ENCODE measurements at regions of chr22 and their contacts with region 1.

Region 1: DNA sequence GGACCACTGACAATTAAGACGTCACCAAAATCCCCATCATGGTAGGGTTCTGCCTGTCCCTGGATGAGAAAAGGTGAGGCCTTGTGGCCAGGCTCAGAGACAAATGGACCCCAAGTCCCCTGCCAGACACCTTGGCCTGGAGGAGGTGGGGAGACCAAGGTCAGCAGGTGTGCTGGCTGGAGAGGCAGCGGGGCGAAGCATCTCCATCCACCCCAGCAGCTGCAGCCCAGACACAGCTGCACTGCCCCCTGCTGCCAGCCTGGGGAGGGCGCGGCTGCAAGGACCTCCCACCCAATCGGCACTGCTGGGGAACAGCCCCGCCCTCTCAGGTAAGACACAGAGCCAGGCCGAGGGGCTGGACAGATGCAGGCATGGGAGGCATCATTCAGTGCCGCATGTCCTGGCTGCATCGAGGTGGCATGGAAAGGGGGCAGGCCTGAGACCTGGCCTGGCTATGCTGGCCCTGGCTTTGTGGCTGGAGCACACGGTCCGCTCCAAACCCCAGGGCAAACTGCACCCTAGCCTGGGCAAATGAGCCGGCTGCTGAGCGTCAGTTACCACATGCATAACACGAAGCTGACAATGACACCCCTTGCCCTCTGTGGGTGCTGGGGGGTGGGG is 12.2 kb upstream of the MFNG start:
- DNase-seq: no peak
- H3K4me3 ChIP-seq: no peak overlapping the region
- H3K27me3 ChIP-seq: no peaks in the 10 kb centered on the region
- CTCF ChIP-seq: 0 out of 2 replicates have a peak, but pooled peaks have one; percentile 15

Region 2: GRCh38 chr22:37511395-37512104 is 13.2 kb after region 1 on chr22:
- CTCF ChIA-PET with region 1: interaction called, 12 read pairs
- POLR2A ChIA-PET with region 1: no interaction called
- DNase-seq: no peak
- H3K4me3 ChIP-seq: no peak overlapping the region
- H3K27me3 ChIP-seq: no peaks in the 10 kb centered on the region
- CTCF ChIP-seq: no peak

Measured in BJ (cell line).